GM12878 (cell line): ENCODE measurements at regions of chr2 and their contacts with region 1.

Region 1: GRCh38 chr2:37414470-37414949 is 70.1 kb downstream of the QPCT start:
- DNase-seq: peak; percentile 53
- ATAC-seq: peak; percentile 94
- H3K4me3 ChIP-seq: no peak overlapping the region
- H3K27ac ChIP-seq: no peak overlapping the region
- H3K4me1 ChIP-seq: peaks cover 4% of the 10 kb centered on the region; the same call in 1 of the 2 replicates
- H3K27me3 ChIP-seq: no peaks in the 10 kb centered on the region
- CTCF ChIP-seq: peak; percentile 88 to 99 (median 98); a peak in 5 of 6 replicates
- EP300 ChIP-seq: no peak
- POLR2A ChIP-seq: no peak
- RAD21 ChIP-seq: peak; percentile 100

Region 2: GRCh38 chr2:37425408-37425807 is 10.9 kb after region 1 on chr2:
- CTCF ChIA-PET with region 1: interaction called, 12 read pairs
- POLR2A ChIA-PET with region 1: no interaction called
- RAD21 ChIA-PET with region 1: interaction called, 3 read pairs
- SMC1A ChIA-PET with region 1: interaction called, 10 read pairs
- in situ Hi-C with region 1: no loop called
- intact Hi-C with region 1: no loop called
- DNase-seq: no peak
- ATAC-seq: no peak
- H3K4me3 ChIP-seq: no peak overlapping the region
- H3K27ac ChIP-seq: no peak overlapping the region
- H3K4me1 ChIP-seq: no peaks in the 10 kb centered on the region
- H3K27me3 ChIP-seq: no peaks in the 10 kb centered on the region
- CTCF ChIP-seq: no peak
- EP300 ChIP-seq: no peak
- POLR2A ChIP-seq: no peak
- RAD21 ChIP-seq: no peak

Region 3: DNA sequence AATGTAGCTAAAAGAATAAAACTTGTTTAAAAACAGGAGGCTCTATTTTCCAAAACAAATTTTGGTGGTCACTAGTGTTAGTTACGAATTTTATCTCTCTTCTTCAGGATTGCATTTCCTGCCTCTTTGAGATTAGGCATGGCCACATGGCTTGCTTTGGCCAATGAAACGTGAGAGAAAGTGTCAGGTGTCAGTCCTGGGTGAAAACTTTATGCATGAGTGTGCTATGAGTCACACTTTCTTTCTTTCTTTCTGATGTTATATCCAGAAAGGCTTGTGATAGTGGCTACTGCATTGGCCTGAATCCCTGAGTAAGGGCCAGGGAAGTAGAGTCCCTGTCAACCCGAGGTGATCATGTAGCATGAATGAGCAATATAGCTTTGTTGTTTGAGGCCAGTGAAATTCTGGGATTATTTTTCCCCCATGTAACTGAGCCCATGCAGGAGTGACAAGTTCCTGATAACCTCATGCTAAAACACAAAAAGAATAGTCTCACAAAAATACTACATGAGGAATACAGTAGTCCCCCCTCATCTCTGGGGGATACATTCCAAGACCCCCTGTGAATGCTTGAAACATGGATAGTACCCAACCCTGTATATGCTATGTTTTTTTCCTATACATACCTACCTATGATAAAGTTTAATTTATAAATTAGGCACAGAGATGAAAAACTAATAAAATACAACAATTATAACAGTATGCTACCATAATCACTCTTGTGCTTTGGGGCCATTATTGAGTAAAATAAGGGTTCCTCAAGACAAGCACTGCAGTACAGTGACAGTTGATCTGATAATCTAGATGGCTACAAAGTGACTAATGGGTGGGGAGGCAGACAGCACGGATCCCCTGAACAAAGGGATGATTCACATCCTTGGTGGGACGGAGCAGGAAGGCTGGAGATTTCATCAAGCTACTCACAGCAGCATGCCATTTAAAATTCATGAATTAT is 147.4 kb after region 1 on chr2:
- CTCF ChIA-PET with region 1: interaction called, 19 read pairs
- POLR2A ChIA-PET with region 1: no interaction called
- RAD21 ChIA-PET with region 1: interaction called, 7 read pairs
- SMC1A ChIA-PET with region 1: interaction called, 4 read pairs
- in situ Hi-C with region 1: no loop called
- intact Hi-C with region 1: no loop called
- DNase-seq: no peak
- ATAC-seq: peak; percentile 86
- H3K4me3 ChIP-seq: no peak overlapping the region
- H3K27ac ChIP-seq: peak overlapping the region; percentile 42; the same call in 1 of the 2 replicates
- H3K4me1 ChIP-seq: peaks cover 46% of the 10 kb centered on the region
- H3K27me3 ChIP-seq: no peaks in the 10 kb centered on the region
- CTCF ChIP-seq: no peak
- EP300 ChIP-seq: no peak
- POLR2A ChIP-seq: no peak
- RAD21 ChIP-seq: no peak

Region 4: DNA sequence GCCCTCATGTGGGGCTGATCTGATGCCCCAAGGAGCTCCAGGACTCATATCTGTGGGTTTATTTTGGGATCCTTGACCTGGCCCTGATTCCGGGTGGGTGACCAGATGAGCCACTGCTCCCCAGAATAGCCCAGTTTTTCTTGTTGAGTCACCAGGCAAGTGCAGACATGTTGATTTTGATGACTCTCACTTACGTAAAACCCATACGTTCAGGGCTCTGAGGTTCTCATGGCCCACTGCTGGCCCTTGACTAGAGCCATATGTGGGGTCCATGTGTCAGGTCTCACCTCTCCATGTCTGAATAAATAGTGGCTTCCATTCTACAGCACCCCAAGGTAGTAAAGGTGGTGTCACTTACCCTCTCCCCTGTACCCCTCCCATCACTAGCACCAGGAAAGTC is 215.0 kb after region 1 on chr2:
- CTCF ChIA-PET with region 1: interaction called, 12 read pairs
- POLR2A ChIA-PET with region 1: interaction called, 4 read pairs
- RAD21 ChIA-PET with region 1: interaction called, 18 read pairs
- SMC1A ChIA-PET with region 1: interaction called, 16 read pairs
- in situ Hi-C with region 1: no loop called
- intact Hi-C with region 1: loop called (anchors 2 kb)
- DNase-seq: no peak
- ATAC-seq: peak; percentile 32
- H3K4me3 ChIP-seq: no peak overlapping the region
- H3K27ac ChIP-seq: peak overlapping the region; percentile 76
- H3K4me1 ChIP-seq: peaks cover 47% of the 10 kb centered on the region
- H3K27me3 ChIP-seq: no peaks in the 10 kb centered on the region
- CTCF ChIP-seq: no peak
- EP300 ChIP-seq: peak; percentile 35 to 41; a peak in 1 of 4 replicates
- POLR2A ChIP-seq: no peak
- RAD21 ChIP-seq: no peak; the same call in 1 of the 2 replicates

Region 5: GRCh38 chr2:37809525-37809924 is 395.0 kb after region 1 on chr2:
- CTCF ChIA-PET with region 1: interaction called, 17 read pairs
- POLR2A ChIA-PET with region 1: no interaction called
- RAD21 ChIA-PET with region 1: interaction called, 5 read pairs
- SMC1A ChIA-PET with region 1: interaction called, 6 read pairs
- in situ Hi-C with region 1: no loop called
- intact Hi-C with region 1: no loop called
- DNase-seq: no peak
- ATAC-seq: no peak
- H3K4me3 ChIP-seq: no peak overlapping the region
- H3K27ac ChIP-seq: no peak overlapping the region
- H3K4me1 ChIP-seq: no peaks in the 10 kb centered on the region
- H3K27me3 ChIP-seq: no peaks in the 10 kb centered on the region
- CTCF ChIP-seq: 0 out of 6 replicates have a peak, but pooled peaks of 1 of the 3 experiments have one; percentile 0
- EP300 ChIP-seq: no peak
- POLR2A ChIP-seq: no peak
- RAD21 ChIP-seq: peak; percentile 25; the same call in 1 of the 2 replicates

Region 6: GRCh38 chr2:37877457-37878315 is 463.2 kb after region 1 on chr2:
- CTCF ChIA-PET with region 1: interaction called, 336 read pairs
- POLR2A ChIA-PET with region 1: interaction called, 4 read pairs
- RAD21 ChIA-PET with region 1: interaction called, 211 read pairs
- SMC1A ChIA-PET with region 1: interaction called, 271 read pairs
- in situ Hi-C with region 1: no loop called
- intact Hi-C with region 1: loop called (anchors 1 kb)
- DNase-seq: no peak
- ATAC-seq: peak; percentile 77
- H3K4me3 ChIP-seq: no peak overlapping the region
- H3K27ac ChIP-seq: no peak overlapping the region
- H3K4me1 ChIP-seq: peaks cover 8% of the 10 kb centered on the region
- H3K27me3 ChIP-seq: peaks cover 0 to 2% of the 10 kb centered on the region in 2 experiments; a peak in 2 of 4 replicates
- CTCF ChIP-seq: peak; percentile 44 to 64 (median 63); a peak in 5 of 6 replicates
- EP300 ChIP-seq: no peak
- POLR2A ChIP-seq: no peak
- RAD21 ChIP-seq: peak; percentile 91